ENCODE measurements at regions of chr16 and their contacts with region 1.

Region 1: GRCh38 chr16:12067714-12068401 is 91.3 kb downstream of the SNX29 start:
- DNase-seq: peak; percentile 75 to 87 (median 82)
- H3K4me3 ChIP-seq: no peak overlapping the region
- H3K27ac ChIP-seq: no peak overlapping the region
- H3K4me1 ChIP-seq: peaks cover 0 to 3% (median 2%) of the 10 kb centered on the region in 4 experiments
- H3K27me3 ChIP-seq: no peaks in the 10 kb centered on the region

Region 2: DNA sequence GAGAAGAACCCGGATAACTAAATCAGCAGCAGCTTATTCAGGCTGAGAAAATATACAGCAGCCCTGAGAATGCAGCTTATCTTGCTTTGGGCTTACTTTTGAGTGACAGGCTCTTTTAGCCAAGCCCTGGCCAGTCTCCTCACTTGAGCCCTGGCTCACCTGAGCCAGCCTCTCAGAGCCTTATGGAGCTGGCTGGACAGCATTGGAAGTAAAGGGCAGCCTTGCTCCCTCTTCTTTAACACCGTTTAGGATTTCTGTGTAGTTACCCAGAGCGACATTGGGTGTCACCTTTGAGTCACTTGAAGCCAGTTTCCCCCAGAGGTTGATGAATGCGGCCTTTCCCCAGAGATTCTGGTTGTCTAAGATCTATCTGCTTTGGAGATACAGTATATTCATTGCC is 118.3 kb before region 1 on chr16:
- CTCF ChIA-PET with region 1: interaction called, 22 read pairs
- POLR2A ChIA-PET with region 1: interaction called, 3 read pairs
- DNase-seq: peak; percentile 43 to 64 (median 51)
- H3K4me3 ChIP-seq: no peak overlapping the region
- H3K27ac ChIP-seq: no peak overlapping the region
- H3K4me1 ChIP-seq: peaks cover 0 to 2% (median 1%) of the 10 kb centered on the region in 4 experiments
- H3K27me3 ChIP-seq: no peaks in the 10 kb centered on the region

Region 3: GRCh38 chr16:11972128-11972527 is 95.7 kb before region 1 on chr16:
- CTCF ChIA-PET with region 1: interaction called, 18 read pairs
- POLR2A ChIA-PET with region 1: no interaction called
- DNase-seq: peak; percentile 33 to 59 (median 47)
- H3K4me3 ChIP-seq: no peak overlapping the region
- H3K27ac ChIP-seq: no peak overlapping the region
- H3K4me1 ChIP-seq: peaks cover 0 to 12% (median 10%) of the 10 kb centered on the region in 4 experiments
- H3K27me3 ChIP-seq: no peaks in the 10 kb centered on the region

Region 4: GRCh38 chr16:12057266-12057665 is 10.6 kb before region 1 on chr16:
- CTCF ChIA-PET with region 1: interaction called, 14 read pairs
- POLR2A ChIA-PET with region 1: no interaction called
- DNase-seq: no peak
- H3K4me3 ChIP-seq: no peak overlapping the region
- H3K27ac ChIP-seq: no peak overlapping the region
- H3K4me1 ChIP-seq: peaks cover 0 to 7% (median under 1%) of the 10 kb centered on the region in 4 experiments
- H3K27me3 ChIP-seq: no peaks in the 10 kb centered on the region

Region 5: GRCh38 chr16:12113523-12114345 is 45.9 kb after region 1 on chr16:
- CTCF ChIA-PET with region 1: no interaction called
- POLR2A ChIA-PET with region 1: no interaction called
- DNase-seq: peak; percentile 54 to 93 (median 91)
- H3K4me3 ChIP-seq: peak overlapping the region in 1 of 7 experiments; percentile 43
- H3K27ac ChIP-seq: no peak overlapping the region
- H3K4me1 ChIP-seq: peaks cover 5 to 38% (median 34%) of the 10 kb centered on the region in 4 experiments
- H3K27me3 ChIP-seq: no peaks in the 10 kb centered on the region

Measured in common myeloid progenitor, CD34-positive (primary cell).